Mammary epithelial cell (primary cell): ENCODE measurements at regions of chr12 and their contacts with region 1.

Region 1: GRCh38 chr12:8860165-8860961 is 37.9 kb downstream of the A2ML1 start:
- DNase-seq: peak; percentile 50
- H3K4me3 ChIP-seq: no peak overlapping the region
- H3K27ac ChIP-seq: no peak overlapping the region
- H3K4me1 ChIP-seq: no peaks in the 10 kb centered on the region
- H3K27me3 ChIP-seq: no peaks in the 10 kb centered on the region
- CTCF ChIP-seq: peak; percentile 82 to 88

Region 2: GRCh38 chr12:8780389-8780788 is 80.0 kb before region 1 on chr12:
- CTCF ChIA-PET with region 1: no interaction called
- dilution Hi-C with region 1: no loop called
- in situ Hi-C with region 1: no loop called
- intact Hi-C with region 1: loop called (anchors 1 kb)
- DNase-seq: peak; percentile 40
- H3K4me3 ChIP-seq: no peak overlapping the region
- H3K27ac ChIP-seq: no peak overlapping the region
- H3K4me1 ChIP-seq: no peaks in the 10 kb centered on the region
- H3K27me3 ChIP-seq: no peaks in the 10 kb centered on the region
- CTCF ChIP-seq: peak; percentile 39 to 71

Region 3: GRCh38 chr12:8834230-8834629 is 26.1 kb before region 1 on chr12:
- CTCF ChIA-PET with region 1: interaction called, 24 read pairs
- dilution Hi-C with region 1: no loop called
- in situ Hi-C with region 1: no loop called
- intact Hi-C with region 1: no loop called
- DNase-seq: no peak
- H3K4me3 ChIP-seq: no peak overlapping the region
- H3K27ac ChIP-seq: no peak overlapping the region
- H3K4me1 ChIP-seq: peaks cover 5% of the 10 kb centered on the region
- H3K27me3 ChIP-seq: no peaks in the 10 kb centered on the region
- CTCF ChIP-seq: no peak